Activated T-helper 2 cell treated with anti-CD3 and anti-CD28 coated beads, Interferon-gamma antibody, Interleukin-2, Interleukin-4, amounts not matched to agents 10 μg/mL and 5 μg/mL and 100 μg/mL, durations not matched to agents 14 hours and 24 hours and 36 hours (primary cell): ENCODE measurements at regions of chr3 and their contacts with region 1.

Region 1: DNA sequence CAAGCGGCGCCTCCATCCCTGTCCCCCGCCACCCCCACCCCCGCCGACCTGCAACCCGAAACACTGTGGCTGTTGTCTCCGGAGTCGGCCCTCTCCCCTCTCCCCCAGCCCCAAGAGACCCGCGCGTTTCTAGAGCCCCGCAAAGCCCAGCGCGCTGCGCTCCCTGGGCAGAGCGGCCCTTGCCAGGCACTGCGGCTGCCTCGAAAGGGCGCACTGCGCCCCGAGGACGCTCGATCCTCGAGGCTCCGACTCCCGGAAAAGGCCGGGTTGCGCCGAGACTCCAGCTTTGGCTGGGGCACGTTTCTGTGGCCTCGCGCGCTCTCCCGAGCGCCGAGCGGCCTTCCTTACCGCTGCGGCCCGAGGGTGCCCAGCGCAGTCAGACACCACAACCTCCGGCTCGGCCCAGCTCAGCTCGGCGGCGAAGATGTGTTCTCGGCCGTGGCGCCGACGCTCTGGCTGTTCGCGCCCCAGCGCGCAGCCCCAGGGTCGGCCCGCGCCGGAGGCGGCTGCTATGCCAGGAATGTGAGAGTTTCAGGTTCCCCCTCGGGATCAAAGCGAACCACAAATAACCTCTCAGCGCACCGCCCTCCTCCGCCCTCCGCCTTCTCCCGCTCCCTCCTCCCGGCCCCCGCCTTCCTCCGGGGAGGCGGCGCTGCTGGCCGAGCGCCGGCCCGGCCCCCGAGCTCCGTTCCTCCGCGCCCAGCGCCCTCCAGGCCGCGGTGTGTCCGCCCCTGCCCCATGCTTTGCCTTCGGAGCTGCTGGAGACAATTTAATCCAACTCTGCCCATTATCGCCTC is at the start of gene AMOTL2:
- DNase-seq: no peak
- H3K4me3 Mint-ChIP-seq: peak within 1 kb of the TSS; percentile 73
- H3K27ac Mint-ChIP-seq: no peak within 1 kb of the TSS
- H3K4me1 Mint-ChIP-seq: peaks cover 5% of the 10 kb centered on the region
- H3K27me3 Mint-ChIP-seq: peaks cover 46% of the 10 kb centered on the region
- total RNA-seq, gene AMOTL2: not detected in 2 replicates

Region 2: DNA sequence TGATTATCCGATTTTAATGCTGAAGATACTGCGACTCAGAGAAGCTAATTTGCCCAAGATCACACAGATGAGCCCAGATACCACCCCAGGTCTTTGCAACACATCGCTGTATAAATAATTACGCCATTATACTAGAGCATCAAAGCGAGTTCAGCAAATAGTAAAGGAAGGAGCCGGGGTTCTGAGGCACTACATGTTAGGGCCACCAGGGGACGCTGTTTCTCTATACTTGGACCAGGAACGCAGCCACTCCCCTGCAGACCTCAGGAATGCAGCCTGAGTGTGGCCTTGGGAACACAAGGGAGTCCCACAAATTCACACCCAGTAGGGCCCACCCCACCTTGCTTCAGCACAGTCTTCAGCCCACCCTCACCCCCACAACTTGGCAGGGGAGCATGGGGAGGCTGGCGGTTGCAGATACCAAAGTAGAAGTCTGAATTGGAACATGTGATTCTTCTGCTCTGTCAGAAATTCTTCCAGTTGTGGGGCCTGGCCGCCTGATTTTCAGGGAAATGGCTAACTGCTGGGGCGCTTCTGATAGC is 65.8 kb before region 1 on chr3:
- intact Hi-C with region 1: loop called (anchors 5 kb)
- DNase-seq: peak; percentile 49
- H3K4me3 Mint-ChIP-seq: no peak overlapping the region
- H3K27ac Mint-ChIP-seq: no peak overlapping the region
- H3K4me1 Mint-ChIP-seq: peaks cover 2% of the 10 kb centered on the region
- H3K27me3 Mint-ChIP-seq: peaks cover 64% of the 10 kb centered on the region

Region 3: DNA sequence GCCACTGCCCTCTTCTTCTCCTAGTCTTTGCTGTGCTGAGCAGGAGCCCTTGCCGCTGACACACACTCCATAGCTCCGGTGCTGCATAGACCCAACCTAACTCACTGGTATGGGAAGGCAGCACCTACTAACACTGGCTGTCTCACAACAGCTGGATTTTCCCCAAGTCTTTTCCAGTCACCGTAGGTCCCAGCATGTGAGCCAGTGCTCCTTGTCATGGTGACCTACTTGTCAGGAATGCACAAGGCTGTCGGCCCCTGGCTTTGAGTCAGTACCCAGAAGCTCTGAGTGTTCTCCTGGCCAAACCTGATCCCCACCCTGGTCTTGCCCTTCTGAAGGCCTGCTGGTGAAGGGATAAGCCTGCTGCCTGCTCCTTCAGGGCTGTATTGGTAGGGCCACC is 25.7 kb before region 1 on chr3:
- intact Hi-C with region 1: no loop called
- DNase-seq: no peak
- H3K4me3 Mint-ChIP-seq: no peak overlapping the region
- H3K27ac Mint-ChIP-seq: no peak overlapping the region
- H3K4me1 Mint-ChIP-seq: no peaks in the 10 kb centered on the region
- H3K27me3 Mint-ChIP-seq: peaks cover 5% of the 10 kb centered on the region